GM18951 (cell line): ENCODE measurements at regions of chr1 and their contacts with region 1.

Region 1: DNA sequence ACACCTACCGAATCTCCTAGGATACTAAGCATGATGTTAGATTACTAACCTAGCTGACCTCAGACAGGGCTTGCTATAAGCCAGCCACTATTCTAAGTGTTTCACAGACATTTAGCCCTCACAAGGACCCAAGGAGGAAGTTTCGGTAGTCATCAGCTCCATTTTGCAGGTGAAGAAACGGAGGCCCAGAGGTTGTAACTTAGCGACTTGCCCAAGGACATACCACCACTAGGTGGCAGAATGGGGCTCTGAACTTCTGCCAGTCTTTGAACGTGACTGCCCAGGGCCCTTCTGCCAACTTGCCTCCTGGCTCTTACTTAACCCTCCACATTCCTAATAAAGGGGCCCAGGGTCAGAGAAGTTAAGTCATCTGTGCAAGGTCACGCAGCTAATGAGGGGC is 283.5 kb downstream of the C1orf94 start:
- POLR2A ChIP-seq: no peak

Region 2: DNA sequence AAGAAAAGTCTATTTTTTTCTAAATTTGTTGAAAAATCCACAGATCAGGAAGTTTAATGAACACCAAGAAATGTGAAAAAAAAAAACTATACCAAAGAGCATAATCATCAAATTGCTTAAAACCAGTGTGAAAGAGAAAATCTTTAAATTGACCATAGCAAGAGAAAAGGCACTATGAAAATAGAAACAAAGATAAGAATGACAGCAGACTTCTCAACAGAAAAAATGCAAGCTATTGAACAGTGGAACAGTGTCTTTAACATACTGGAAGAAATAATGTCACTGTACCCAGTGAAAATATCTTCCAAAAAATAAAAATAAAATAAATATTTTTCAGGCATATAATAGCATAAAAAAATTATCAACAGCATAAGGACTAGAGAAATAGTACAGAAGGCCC is 51.6 kb after region 1 on chr1:
- in situ Hi-C with region 1: no loop called
- POLR2A ChIP-seq: no peak

Region 3: DNA sequence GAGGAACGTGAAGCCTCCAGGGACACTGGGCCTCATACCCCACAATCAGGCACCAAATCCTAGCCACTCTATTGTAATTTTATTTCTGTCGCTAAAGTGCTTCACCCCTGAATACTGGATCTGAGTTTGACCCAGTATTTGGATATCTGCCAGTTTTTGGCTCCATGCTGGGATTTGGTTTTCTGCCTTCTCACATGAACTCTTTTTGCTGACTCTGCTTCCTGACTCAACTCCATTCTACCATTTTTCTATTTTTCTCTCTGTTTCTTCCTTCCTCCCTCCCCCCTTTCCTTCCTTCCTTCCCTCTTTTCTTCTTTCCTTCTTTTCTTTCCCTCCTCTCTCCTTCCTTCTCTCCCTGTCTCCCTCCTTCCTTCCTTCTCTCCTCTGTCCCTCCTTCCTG is 143.4 kb after region 1 on chr1:
- in situ Hi-C with region 1: loop called (anchors 5 kb)
- POLR2A ChIP-seq: no peak